Naive thymus-derived CD4-positive, alpha-beta T cell (primary cell): ENCODE measurements at regions of chr10 and their contacts with region 1.

Region 1: GRCh38 chr10:133394064-133394663 is at the start of gene MTG1:
- DNase-seq: peak; percentile 84 to 99 (median 91)
- ATAC-seq: peak; percentile 94
- H3K4me3 ChIP-seq: peak within 1 kb of the TSS; percentile 72
- H3K4me3 Mint-ChIP-seq: peak within 1 kb of the TSS; percentile 89 to 98 (median 92)
- H3K27ac ChIP-seq: peak within 1 kb of the TSS; percentile 81
- H3K27ac Mint-ChIP-seq: peak within 1 kb of the TSS; percentile 71 to 96 (median 89)
- H3K4me1 ChIP-seq: peaks cover 32 to 33% of the 10 kb centered on the region in 2 donors
- H3K4me1 Mint-ChIP-seq: peaks cover 19 to 49% (median 39%) of the 10 kb centered on the region in 7 donors
- H3K27me3 ChIP-seq: no peaks in the 10 kb centered on the region
- H3K27me3 Mint-ChIP-seq: peaks cover 0 to 2% (median 0%) of the 10 kb centered on the region in 5 donors
- total RNA-seq, gene MTG1: 51.0 to 67.1 (median 57.2) TPM

Region 2: DNA sequence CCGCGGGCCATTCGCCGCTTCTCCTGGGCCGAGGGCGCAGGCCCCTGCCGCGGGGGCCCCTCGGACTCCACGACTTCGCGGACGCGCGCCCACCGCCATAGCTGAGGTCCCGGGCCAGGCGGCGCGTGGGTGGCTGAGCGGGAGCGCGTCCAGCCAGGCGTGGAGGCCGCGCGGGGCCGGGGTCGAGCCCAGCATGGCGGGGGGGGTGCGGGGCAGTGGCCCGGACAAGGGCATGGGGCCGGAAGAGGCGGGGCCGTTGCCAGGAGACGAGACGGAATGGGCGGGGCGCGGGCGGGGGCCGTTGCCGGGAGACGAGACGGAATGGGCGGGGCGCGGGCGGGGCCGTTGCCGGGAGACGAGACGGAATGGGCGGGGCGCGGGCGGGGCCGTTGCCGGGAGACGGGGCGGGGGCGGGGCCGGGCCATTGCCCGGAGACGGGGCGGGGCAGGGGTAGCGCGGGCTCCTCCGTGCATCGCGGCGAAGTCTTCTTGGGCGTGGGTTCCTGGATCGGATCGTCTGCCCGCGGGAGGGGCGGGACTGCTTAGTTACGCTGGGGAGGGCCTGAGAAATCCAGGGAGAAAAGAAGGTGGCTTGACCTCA is 132.3 kb before region 1 on chr10:
- CTCF ChIA-PET with region 1: no interaction called
- POLR2A ChIA-PET with region 1: interaction called, 5 read pairs
- intact Hi-C with region 1: loop called (anchors 5 kb)
- DNase-seq: peak; percentile 60 to 84 (median 72)
- ATAC-seq: peak; percentile 65
- H3K4me3 ChIP-seq: peak overlapping the region; percentile 52
- H3K4me3 Mint-ChIP-seq: peak overlapping the region; percentile 55 to 83 (median 80)
- H3K27ac ChIP-seq: peak overlapping the region; percentile 87
- H3K27ac Mint-ChIP-seq: peak overlapping the region; percentile 47 to 93 (median 80)
- H3K4me1 ChIP-seq: peaks cover 53 to 68% of the 10 kb centered on the region in 2 donors
- H3K4me1 Mint-ChIP-seq: peaks cover 51 to 81% (median 67%) of the 10 kb centered on the region in 7 donors
- H3K27me3 ChIP-seq: no peaks in the 10 kb centered on the region
- H3K27me3 Mint-ChIP-seq: peaks cover 0 to 2% (median 0%) of the 10 kb centered on the region in 5 donors

Region 3: DNA sequence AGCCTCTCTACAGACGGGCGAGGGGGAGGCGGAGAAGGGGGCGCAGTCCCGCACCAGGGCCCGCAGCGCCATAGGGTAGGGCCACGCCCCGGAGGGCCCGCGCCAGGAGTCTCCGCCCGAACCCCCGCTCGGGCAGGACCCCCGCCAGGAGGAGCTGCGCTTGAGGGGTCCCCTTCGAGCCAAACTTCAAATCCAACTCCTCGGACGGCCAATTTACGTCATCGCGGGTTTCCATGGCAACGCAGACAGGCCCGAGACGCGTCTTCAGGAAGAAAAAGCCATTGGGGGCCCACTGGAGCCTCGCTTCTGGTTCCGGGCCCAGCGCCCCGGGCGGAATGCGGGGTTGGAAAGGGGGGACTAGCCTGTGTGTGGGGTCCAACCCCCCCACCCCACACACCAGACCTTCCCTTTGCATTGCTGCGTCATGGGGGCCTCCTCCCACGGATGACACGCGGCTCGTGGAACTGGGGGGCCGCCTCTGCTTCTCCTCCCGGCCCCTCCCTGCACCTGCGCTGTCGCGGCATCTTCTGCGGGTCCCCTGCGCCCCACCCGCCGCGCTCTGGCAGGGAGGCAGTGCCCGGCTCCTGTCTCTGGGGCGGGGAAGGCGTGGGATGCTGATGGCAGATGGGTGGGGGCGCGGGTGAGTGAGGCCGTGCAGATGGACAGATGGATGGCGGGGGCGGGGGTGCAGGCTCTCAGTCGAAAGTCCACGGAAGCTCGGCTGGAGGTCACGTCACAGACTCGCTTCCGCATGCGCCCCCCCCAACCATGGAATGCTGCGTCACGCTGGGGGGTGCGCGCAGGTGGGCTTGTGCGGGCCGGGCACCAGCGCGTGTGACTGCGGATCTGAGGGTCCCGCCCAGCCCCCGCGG is 58.7 kb before region 1 on chr10:
- CTCF ChIA-PET with region 1: interaction called, 3 read pairs
- POLR2A ChIA-PET with region 1: interaction called, 11 read pairs
- intact Hi-C with region 1: loop called in 1 of 2 experiments (anchors 1 kb)
- DNase-seq: peak; percentile 56 to 95 (median 81)
- ATAC-seq: peak; percentile 53
- H3K4me3 ChIP-seq: peak overlapping the region; percentile 65
- H3K4me3 Mint-ChIP-seq: peak overlapping the region in 9 of 10 donors; percentile 48 to 81 (median 68)
- H3K27ac ChIP-seq: peak overlapping the region; percentile 78
- H3K27ac Mint-ChIP-seq: peak overlapping the region in 8 of 9 donors; percentile 50 to 93 (median 78)
- H3K4me1 ChIP-seq: peaks cover 10 to 20% of the 10 kb centered on the region in 2 donors
- H3K4me1 Mint-ChIP-seq: peaks cover 0 to 5% (median 0%) of the 10 kb centered on the region in 7 donors
- H3K27me3 ChIP-seq: no peaks in the 10 kb centered on the region
- H3K27me3 Mint-ChIP-seq: peaks cover 0 to 41% (median 0%) of the 10 kb centered on the region in 5 donors

Region 4: DNA sequence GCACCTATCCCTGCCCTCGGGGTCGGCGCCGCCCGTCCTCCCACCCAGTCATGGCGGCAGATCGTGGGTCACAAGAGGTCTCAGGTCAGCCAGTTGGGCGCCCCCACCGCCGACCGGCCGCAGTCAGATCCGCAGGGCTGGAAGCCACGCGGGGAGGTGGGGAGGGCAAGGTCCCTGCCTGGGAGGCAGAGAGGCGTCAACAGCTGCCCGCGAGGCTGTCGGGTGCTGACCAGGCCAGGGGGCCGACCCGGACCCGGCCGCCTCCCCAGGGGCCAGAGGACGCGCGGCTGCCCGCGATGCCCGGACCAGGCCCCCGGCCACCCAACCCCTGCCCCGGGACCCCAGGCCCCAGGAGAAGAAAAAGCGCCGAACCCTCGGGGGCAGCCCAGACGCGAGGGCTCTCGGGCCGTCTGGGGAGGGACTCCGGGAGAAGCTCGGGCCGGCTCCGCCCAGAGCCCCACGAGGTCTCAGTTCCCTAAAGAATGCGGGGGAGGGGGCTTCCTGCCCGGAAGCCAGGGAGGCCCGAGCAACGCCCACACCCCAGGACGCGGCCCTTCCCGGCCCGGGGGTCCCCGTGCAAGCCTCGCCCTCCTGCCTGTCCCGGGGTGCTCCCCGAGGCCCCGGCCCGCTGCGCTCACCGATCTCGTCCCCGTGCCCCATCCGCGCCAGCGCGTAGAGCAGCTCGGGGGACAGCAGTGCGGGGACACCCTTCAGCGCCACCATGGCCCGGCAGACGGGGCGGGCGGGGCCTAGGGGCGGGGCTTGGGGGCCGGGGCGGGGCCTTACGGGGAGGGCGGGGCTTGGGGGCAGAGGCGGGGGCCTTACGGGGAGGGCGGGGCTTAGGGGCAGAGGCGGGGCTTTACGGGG is 36.6 kb before region 1 on chr10 and contains the start of gene FUOM:
- CTCF ChIA-PET with region 1: interaction called, 3 read pairs
- POLR2A ChIA-PET with region 1: interaction called, 4 read pairs
- intact Hi-C with region 1: loop called (anchors 1 to 5 kb)
- DNase-seq: peak; percentile 60 to 88 (median 74)
- ATAC-seq: peak; percentile 95
- H3K4me3 ChIP-seq: peak within 1 kb of the TSS; percentile 61
- H3K4me3 Mint-ChIP-seq: peak within 1 kb of the TSS; percentile 62 to 85 (median 79)
- H3K27ac ChIP-seq: peak within 1 kb of the TSS; percentile 76
- H3K27ac Mint-ChIP-seq: peak within 1 kb of the TSS in 7 of 9 donors; percentile 23 to 72 (median 59)
- H3K4me1 ChIP-seq: no peaks in the 10 kb centered on the region
- H3K4me1 Mint-ChIP-seq: peaks cover 0 to 6% (median 4%) of the 10 kb centered on the region in 7 donors
- H3K27me3 ChIP-seq: no peaks in the 10 kb centered on the region
- H3K27me3 Mint-ChIP-seq: no peaks in the 10 kb centered on the region
- total RNA-seq, gene FUOM: 11.2 to 24.6 (median 16.9) TPM

Region 5: DNA sequence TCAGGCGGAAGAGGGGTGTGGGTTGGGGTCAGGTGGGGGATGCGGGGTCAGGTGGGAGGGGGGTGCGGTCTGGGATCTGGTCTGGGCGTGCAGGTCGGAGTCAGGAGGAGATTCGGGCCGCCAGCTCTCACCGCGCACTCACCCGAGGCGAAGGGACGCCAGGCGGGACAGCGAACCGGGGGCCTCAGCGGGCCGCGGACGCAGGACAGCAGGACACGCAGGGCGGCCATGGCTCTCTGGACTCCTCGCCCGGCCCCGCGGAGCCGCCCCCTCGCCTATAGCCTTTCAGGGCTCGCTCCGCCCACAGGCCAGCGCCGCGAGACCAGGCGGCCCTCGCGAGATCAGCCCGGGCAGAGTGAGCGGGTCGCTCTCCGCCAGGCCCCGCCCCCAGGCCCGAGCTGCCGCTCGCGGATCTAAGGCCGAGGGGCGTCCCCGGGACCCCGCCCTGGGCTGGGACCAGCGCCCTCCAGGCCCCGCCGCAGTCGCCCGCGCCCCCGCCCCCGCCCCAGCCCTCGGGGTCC is 21.0 kb before region 1 on chr10 and contains the start of gene ECHS1:
- CTCF ChIA-PET with region 1: no interaction called
- POLR2A ChIA-PET with region 1: interaction called, 47 read pairs
- intact Hi-C with region 1: loop called (anchors 1 kb)
- DNase-seq: peak; percentile 81 to 99 (median 90)
- ATAC-seq: peak; percentile 99
- H3K4me3 ChIP-seq: peak within 1 kb of the TSS; percentile 68
- H3K4me3 Mint-ChIP-seq: peak within 1 kb of the TSS; percentile 57 to 92 (median 81)
- H3K27ac ChIP-seq: peak within 1 kb of the TSS; percentile 82
- H3K27ac Mint-ChIP-seq: peak within 1 kb of the TSS; percentile 14 to 83 (median 67)
- H3K4me1 ChIP-seq: peaks cover 0 to 3% of the 10 kb centered on the region in 2 donors
- H3K4me1 Mint-ChIP-seq: peaks cover 0 to 21% (median 12%) of the 10 kb centered on the region in 7 donors
- H3K27me3 ChIP-seq: no peaks in the 10 kb centered on the region
- H3K27me3 Mint-ChIP-seq: peaks cover 0 to 14% (median 0%) of the 10 kb centered on the region in 5 donors
- total RNA-seq, gene ECHS1: 17.5 to 39.8 (median 28.9) TPM

Region 6: DNA sequence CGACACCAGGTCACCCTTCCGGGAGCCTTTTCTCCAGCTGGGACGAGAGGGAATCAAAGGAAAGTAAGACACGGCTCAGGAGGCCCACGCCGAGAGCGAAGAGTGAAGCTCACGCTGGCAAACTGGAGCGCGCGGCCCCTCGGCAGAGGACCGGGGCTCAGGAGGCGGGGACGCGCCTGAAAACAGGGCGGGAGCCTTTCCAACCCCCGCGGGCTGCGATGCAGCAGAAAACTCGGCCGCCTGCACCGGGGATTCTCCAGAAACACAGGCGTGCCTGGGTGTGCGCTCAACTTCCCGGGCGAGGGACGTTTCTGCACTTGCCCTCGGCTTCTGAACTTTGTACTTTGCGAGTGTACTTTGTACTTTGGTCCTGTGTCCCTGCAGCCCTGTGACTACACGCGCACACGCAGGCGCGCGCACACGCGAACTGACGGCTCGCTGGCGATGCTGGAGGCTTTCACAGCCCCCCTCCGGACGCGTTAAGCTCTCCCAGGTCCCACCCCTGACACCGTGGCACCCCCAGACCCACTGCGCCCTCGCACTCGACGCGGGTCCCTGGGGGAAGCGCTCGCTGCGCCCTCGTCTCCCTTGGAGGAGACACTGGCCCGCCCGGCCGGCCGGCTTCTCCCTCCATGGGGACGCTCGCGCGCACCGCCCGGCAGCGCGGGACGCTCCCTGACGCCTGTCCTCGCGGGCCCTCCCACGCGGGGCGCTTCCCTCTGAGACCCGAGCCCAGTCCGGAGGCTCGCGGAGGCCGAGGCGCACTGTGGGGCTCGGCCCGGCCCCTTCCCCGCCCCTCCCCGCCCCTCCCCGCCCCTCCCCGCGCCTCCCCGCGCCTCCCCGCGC is 15.7 kb before region 1 on chr10:
- CTCF ChIA-PET with region 1: no interaction called
- POLR2A ChIA-PET with region 1: interaction called, 47 read pairs
- intact Hi-C with region 1: loop called (anchors 1 kb)
- DNase-seq: peak in 8 of 9 donors; percentile 51 to 78 (median 59)
- ATAC-seq: peak; percentile 73
- H3K4me3 ChIP-seq: peak overlapping the region; percentile 92
- H3K4me3 Mint-ChIP-seq: peak overlapping the region; percentile 82 to 90 (median 86)
- H3K27ac ChIP-seq: peak overlapping the region; percentile 69
- H3K27ac Mint-ChIP-seq: peak overlapping the region in 5 of 9 donors; percentile 33 to 84 (median 75)
- H3K4me1 ChIP-seq: peaks cover 0 to 3% of the 10 kb centered on the region in 2 donors
- H3K4me1 Mint-ChIP-seq: peaks cover 0 to 18% (median 10%) of the 10 kb centered on the region in 7 donors
- H3K27me3 ChIP-seq: no peaks in the 10 kb centered on the region
- H3K27me3 Mint-ChIP-seq: peaks cover 0 to 14% (median 0%) of the 10 kb centered on the region in 5 donors

Region 7: GRCh38 chr10:133520155-133520738 is 126.1 kb after region 1 on chr10:
- CTCF ChIA-PET with region 1: no interaction called
- POLR2A ChIA-PET with region 1: no interaction called
- intact Hi-C with region 1: loop called in 1 of 2 experiments (anchors 1 kb)
- DNase-seq: peak; percentile 79 to 94 (median 87)
- ATAC-seq: peak; percentile 100
- H3K4me3 ChIP-seq: peak overlapping the region; percentile 61
- H3K4me3 Mint-ChIP-seq: peak overlapping the region; percentile 39 to 76 (median 64)
- H3K27ac ChIP-seq: peak overlapping the region; percentile 52
- H3K27ac Mint-ChIP-seq: peak overlapping the region in 5 of 9 donors; percentile 26 to 81 (median 48)
- H3K4me1 ChIP-seq: peaks cover 8 to 12% of the 10 kb centered on the region in 2 donors
- H3K4me1 Mint-ChIP-seq: peaks cover 0 to 21% (median 11%) of the 10 kb centered on the region in 7 donors
- H3K27me3 ChIP-seq: no peaks in the 10 kb centered on the region
- H3K27me3 Mint-ChIP-seq: peaks cover 0 to 43% (median 15%) of the 10 kb centered on the region in 5 donors